Heart right ventricle (tissue), 16 donors: ENCODE measurements at regions of chrX and their contacts with region 1.

Region 1: GRCh38 chrX:37349221-37350064 is at the start of gene PRRG1:
- DNase-seq: peak; percentile 79 to 81
- ATAC-seq: peak; percentile 94 to 98 (median 96)
- H3K4me3 ChIP-seq: peak within 1 kb of the TSS; percentile 55 to 78 (median 70)
- H3K27ac ChIP-seq: peak within 1 kb of the TSS; percentile 78 to 92 (median 88)
- H3K4me1 ChIP-seq: peaks cover 0 to 19% (median 4%) of the 10 kb centered on the region in 9 donors
- H3K27me3 ChIP-seq: peaks cover 0 to 36% (median 0%) of the 10 kb centered on the region in 7 donors
- CTCF ChIP-seq: no peak
- total RNA-seq, gene PRRG1: 8.8 to 15.9 (median 11.2) TPM

Region 2: DNA sequence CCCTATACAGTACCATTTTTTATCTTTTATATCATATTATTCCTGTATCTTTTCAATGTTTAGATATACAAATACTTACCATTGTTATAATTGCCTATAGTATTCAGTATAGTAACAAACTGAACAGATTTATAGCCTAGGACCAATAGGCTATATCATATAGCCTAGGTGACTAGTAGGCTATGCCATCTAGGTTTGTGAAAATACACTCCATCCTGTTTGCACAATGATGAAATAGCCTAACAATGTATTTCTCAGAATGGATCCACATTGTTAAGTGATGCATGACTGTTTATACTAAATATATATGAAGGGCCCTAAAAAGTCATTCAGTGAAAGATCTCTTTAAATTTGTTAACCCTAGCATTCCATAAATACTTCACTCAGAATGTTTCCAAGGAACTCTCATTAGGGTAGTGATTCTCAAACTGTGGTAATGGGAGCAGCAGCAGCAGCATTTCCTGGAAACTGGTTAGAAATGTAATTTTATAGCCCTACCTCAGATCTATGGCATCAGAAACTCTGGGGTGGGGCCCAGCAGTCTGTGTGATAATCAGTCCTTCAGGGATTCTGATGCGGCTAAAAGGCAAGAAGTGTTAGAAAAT is 74.5 kb after region 1 on chrX:
- intact Hi-C with region 1: loop called in 1 of 10 experiments (anchors 10 kb)
- DNase-seq: no peak
- ATAC-seq: no peak
- H3K4me3 ChIP-seq: no peak overlapping the region
- H3K27ac ChIP-seq: no peak overlapping the region
- H3K4me1 ChIP-seq: peaks cover 0 to 6% (median 0%) of the 10 kb centered on the region in 9 donors
- H3K27me3 ChIP-seq: peaks cover 0 to 6% (median 0%) of the 10 kb centered on the region in 7 donors
- CTCF ChIP-seq: no peak

Region 3: GRCh38 chrX:37434362-37434761 is 84.9 kb after region 1 on chrX:
- intact Hi-C with region 1: loop called in 2 of 10 experiments (anchors 1 to 10 kb)
- DNase-seq: no peak
- ATAC-seq: no peak
- H3K4me3 ChIP-seq: no peak overlapping the region
- H3K27ac ChIP-seq: no peak overlapping the region
- H3K4me1 ChIP-seq: no peaks in the 10 kb centered on the region
- H3K27me3 ChIP-seq: peaks cover 0 to 6% (median 0%) of the 10 kb centered on the region in 7 donors
- CTCF ChIP-seq: peak in 1 of 9 donors; percentile 9